ENCODE measurements at regions of chr9 and their contacts with region 1.

Region 1: GRCh38 chr9:134325817-134326723 is at the start of gene RXRA:
- DNase-seq: peak in 1 of 2 donors; percentile 87
- H3K4me3 ChIP-seq: peak within 1 kb of the TSS; percentile 86 to 91
- H3K27ac ChIP-seq: peak within 1 kb of the TSS; percentile 97 to 99
- H3K4me1 ChIP-seq: peaks cover 21 to 57% of the 10 kb centered on the region in 2 donors
- H3K27me3 ChIP-seq: no peaks in the 10 kb centered on the region
- CTCF ChIP-seq: peak in 1 of 3 experiments; percentile 34
- total RNA-seq, gene RXRA: 64.1 TPM

Region 2: DNA sequence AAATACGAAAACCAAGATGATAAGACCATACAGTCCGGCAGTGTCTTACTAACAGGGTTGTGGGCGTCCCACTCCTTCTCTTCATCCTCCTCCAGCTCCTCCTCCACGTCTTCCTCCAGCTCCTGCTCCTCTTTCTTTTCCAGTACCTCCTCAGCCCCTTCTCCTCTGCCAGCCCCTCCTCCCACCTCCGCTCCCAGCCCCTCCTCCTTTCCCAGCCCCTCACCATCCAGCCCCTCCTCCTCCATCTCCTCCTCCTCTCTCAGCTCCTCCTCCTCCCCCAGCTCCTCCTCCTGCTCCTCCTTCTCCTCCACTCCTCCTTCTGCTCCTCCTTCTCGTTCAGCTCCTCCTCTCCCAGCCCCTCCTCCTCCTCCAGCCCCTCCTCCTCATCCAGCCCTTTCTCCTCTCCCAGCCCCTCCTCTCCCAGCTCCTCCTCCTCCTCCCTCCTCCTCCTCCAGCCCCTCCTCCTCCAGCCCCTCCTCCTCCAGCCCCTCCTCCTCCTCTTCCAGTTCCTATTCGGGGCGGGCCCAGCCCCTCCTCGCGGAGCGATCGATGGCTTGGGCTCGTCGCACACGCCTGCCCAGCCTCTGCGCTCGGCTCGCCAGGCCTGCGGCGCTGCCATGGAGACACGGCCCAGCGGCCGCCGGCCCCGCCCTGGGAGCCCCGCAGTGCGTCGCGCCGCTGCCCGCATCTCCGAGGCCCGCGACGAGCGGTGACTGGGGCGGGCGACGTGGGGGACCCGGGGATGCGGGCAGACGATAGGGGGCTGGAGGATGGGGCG is 301.1 kb before region 1 on chr9 and contains the start of gene BRD3OS:
- intact Hi-C with region 1: loop called (anchors 5 kb)
- DNase-seq: peak; percentile 86 to 98
- H3K4me3 ChIP-seq: peak within 1 kb of the TSS; percentile 70 to 97
- H3K27ac ChIP-seq: peak within 1 kb of the TSS; percentile 45 to 68
- H3K4me1 ChIP-seq: peaks cover 0 to 3% of the 10 kb centered on the region in 2 donors
- H3K27me3 ChIP-seq: no peaks in the 10 kb centered on the region
- CTCF ChIP-seq: no peak
- total RNA-seq, gene BRD3OS: 15.9 TPM

Region 3: DNA sequence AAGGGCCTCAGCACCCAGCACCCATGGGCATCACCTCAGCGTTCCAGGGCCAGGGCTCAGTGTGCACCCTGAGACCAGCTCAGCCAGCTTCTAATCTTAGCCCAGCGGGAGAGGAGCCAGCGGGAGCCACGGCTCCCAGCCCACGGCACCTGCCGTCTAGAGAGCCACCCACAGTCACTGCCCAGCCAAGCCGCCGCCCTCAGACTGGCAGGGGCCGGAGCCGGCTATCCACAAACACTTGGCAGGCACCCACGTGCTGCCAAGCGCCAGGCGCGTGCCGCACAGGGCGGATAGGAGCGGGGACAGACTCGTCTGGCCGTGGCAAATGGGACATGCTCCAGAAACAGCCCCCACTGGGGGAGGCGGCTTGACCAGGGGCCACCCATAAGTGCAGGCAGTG is 276.8 kb before region 1 on chr9:
- intact Hi-C with region 1: no loop called
- DNase-seq: no peak
- H3K4me3 ChIP-seq: no peak overlapping the region
- H3K27ac ChIP-seq: no peak overlapping the region
- H3K4me1 ChIP-seq: peaks cover 0 to 4% of the 10 kb centered on the region in 2 donors
- H3K27me3 ChIP-seq: no peaks in the 10 kb centered on the region
- CTCF ChIP-seq: no peak

Region 4: DNA sequence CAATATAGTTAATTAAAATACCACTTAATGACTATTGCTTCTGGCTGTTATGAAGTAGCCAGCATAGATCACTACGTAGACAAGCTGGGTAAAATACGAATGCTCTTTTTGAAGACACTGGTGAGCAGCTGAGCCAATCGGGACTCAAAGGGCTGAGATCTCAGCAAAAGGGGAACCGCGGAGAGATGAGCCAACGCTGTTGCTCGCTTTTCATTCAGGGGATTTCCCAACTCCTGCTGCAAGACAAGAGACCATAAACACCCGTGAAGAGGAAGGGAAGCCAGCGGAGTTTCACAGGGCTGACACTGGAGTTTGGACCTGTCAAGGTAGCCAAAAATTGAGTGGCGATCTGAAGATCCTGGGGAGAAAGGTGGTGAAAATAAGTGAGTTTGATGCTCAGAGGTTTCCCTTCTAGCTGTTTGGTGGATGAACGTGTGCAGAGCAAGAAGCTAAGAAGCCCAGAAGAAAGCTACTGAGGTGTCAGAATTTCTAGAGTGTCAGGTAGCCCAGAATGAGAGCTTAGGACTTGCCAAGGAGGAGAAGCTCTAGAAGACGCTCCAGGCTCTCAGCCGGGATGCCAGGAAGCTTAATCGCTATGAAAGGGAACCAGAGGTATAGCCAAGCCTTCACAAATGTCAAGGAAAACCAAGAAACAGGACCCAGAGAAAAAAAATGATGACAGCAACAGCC is 82.1 kb before region 1 on chr9:
- intact Hi-C with region 1: no loop called
- DNase-seq: no peak
- H3K4me3 ChIP-seq: no peak overlapping the region
- H3K27ac ChIP-seq: no peak overlapping the region
- H3K4me1 ChIP-seq: no peaks in the 10 kb centered on the region
- H3K27me3 ChIP-seq: no peaks in the 10 kb centered on the region
- CTCF ChIP-seq: no peak

Region 5: GRCh38 chr9:134283111-134283515 is 43.0 kb before region 1 on chr9:
- intact Hi-C with region 1: loop called (anchors 2 kb)
- DNase-seq: peak; percentile 57 to 90
- H3K4me3 ChIP-seq: peak overlapping the region in 1 of 2 donors; percentile 28
- H3K27ac ChIP-seq: peak overlapping the region in 1 of 2 donors; percentile 52
- H3K4me1 ChIP-seq: peaks cover 12 to 18% of the 10 kb centered on the region in 2 donors
- H3K27me3 ChIP-seq: no peaks in the 10 kb centered on the region
- CTCF ChIP-seq: no peak

Region 6: DNA sequence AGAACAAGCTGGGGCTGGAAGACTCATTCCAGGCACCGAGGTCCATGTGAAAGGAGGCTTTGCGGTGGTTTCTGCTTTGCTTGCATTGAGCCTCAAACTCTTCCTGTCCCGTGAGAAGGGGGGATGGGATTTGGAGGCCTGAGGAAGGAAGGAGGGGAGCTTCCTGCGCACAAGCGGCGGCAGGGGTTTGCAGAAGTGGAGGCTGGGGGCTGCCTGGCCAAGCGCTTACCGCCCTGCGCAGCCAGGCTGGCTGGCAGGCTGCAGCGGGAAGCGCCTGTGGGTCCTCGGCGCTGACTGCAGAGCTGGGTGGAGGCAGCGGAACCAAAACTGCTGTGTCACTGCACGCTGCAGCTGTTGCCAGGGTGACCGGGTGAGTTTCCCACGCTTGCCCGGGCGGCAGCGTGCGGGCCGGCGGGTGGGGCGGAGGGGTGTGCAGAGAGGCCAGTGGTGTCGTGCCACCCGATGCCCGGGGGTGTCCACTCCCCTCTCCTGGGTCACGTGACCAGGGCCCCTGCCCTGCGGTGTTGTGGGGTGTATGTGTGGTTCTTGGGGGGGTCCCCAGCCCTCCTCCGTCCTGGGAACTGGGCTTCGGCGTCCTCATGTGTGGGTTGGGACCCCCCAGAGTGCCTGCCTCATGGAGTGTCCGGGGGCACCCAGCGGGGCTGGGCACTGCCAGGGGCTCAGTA is 81.2 kb after region 1 on chr9:
- intact Hi-C with region 1: loop called (anchors 2 kb)
- DNase-seq: peak; percentile 66 to 94
- H3K4me3 ChIP-seq: peak overlapping the region; percentile 27 to 54
- H3K27ac ChIP-seq: peak overlapping the region; percentile 74 to 82
- H3K4me1 ChIP-seq: peaks cover 58 to 77% of the 10 kb centered on the region in 2 donors
- H3K27me3 ChIP-seq: no peaks in the 10 kb centered on the region
- CTCF ChIP-seq: no peak

Region 7: GRCh38 chr9:134641173-134641985 is 315.3 kb after region 1 on chr9 and contains the start of gene COL5A1:
- intact Hi-C with region 1: loop called (anchors 5 kb)
- DNase-seq: peak; percentile 65 to 95
- H3K4me3 ChIP-seq: peak within 1 kb of the TSS; percentile 74 to 75
- H3K27ac ChIP-seq: peak within 1 kb of the TSS; percentile 92 to 93
- H3K4me1 ChIP-seq: peaks cover 11 to 18% of the 10 kb centered on the region in 2 donors
- H3K27me3 ChIP-seq: no peaks in the 10 kb centered on the region
- CTCF ChIP-seq: peak in 2 of 3 experiments; percentile 32 to 62
- total RNA-seq, gene COL5A1: 99.6 TPM

Region 8: GRCh38 chr9:135907431-135908092 is 1581.5 kb after region 1 on chr9 and contains the start of gene CAMSAP1:
- intact Hi-C with region 1: loop called (anchors 5 kb)
- DNase-seq: peak; percentile 53 to 95
- H3K4me3 ChIP-seq: peak within 1 kb of the TSS; percentile 89 to 97
- H3K27ac ChIP-seq: peak within 1 kb of the TSS; percentile 58 to 76
- H3K4me1 ChIP-seq: peaks cover 10 to 21% of the 10 kb centered on the region in 2 donors
- H3K27me3 ChIP-seq: no peaks in the 10 kb centered on the region
- CTCF ChIP-seq: no peak
- total RNA-seq, gene CAMSAP1: 10.1 TPM

Measured in ascending aorta (tissue), 2 donors.